Gastrocnemius medialis (tissue), 4 donors: ENCODE measurements at regions of chr17 and their contacts with region 1.

Region 1: GRCh38 chr17:16973760-16974540 is 2.0 kb upstream of the TNFRSF13B start:
- DNase-seq: no peak
- ATAC-seq: no peak
- H3K4me3 ChIP-seq: no peak overlapping the region
- H3K27ac ChIP-seq: no peak overlapping the region
- H3K4me1 ChIP-seq: no peaks in the 10 kb centered on the region
- H3K27me3 ChIP-seq: peaks cover 0 to 4% (median 0%) of the 10 kb centered on the region in 3 donors
- CTCF ChIP-seq: no peak
- POLR2A ChIP-seq: no peak

Region 2: GRCh38 chr17:16915752-16916556 is 58.0 kb before region 1 on chr17:
- in situ Hi-C with region 1: loop called in 1 of 4 experiments (anchors 10 kb)
- intact Hi-C with region 1: no loop called
- DNase-seq: no peak
- ATAC-seq: no peak
- H3K4me3 ChIP-seq: no peak overlapping the region
- H3K27ac ChIP-seq: no peak overlapping the region
- H3K4me1 ChIP-seq: no peaks in the 10 kb centered on the region
- H3K27me3 ChIP-seq: no peaks in the 10 kb centered on the region
- CTCF ChIP-seq: peak in 1 of 5 experiments; percentile 35
- POLR2A ChIP-seq: no peak